Endothelial cell of umbilical vein (primary cell): ENCODE measurements at regions of chr12 and their contacts with region 1.

Region 1: DNA sequence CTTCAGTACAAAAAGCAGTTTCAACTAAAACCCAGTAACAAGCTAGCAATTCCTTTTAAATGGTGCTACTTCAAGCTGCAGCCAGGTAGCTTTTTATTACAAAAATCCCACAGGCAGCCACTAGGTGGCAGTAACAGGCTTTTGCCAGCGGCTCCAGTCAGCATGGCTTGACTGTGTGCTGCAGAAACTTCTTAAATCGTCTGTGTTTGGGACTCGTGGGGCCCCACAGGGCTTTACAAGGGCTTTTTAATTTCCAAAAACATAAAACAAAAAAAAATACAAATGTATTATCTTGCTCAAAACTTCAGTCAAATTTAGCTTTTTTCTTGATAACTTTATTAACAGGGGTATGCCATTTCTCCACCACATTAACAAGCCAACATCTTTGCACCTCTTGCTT is 3.6 kb upstream of the CLEC4E start:
- DNase-seq: peak; percentile 81
- H3K4me3 ChIP-seq: no peak overlapping the region
- H3K27ac ChIP-seq: no peak overlapping the region
- H3K4me1 ChIP-seq: no peaks in the 10 kb centered on the region
- H3K27me3 ChIP-seq: peaks cover 10 to 22% of the 10 kb centered on the region in 2 experiments
- CTCF ChIP-seq: peak; percentile 74 to 81
- POLR2A ChIP-seq: no peak

Region 2: DNA sequence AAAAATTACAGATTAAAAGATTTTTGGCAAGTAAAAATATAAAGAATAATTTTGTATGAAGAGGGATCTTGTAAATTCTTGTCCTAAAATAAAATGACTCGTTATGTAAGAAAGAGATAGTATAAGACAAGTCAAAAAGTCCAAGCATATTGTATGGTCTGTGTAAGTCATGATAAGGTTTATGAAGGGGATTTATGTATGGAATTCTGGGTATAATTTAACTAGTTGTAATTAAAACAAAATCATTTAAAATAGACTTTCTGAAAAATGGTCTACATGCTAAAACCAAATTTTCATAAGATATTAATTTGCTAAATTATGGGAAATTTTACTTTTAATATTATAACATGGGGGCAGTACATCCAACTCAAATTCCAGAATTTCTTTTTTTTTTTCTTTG is 1372.4 kb before region 1 on chr12:
- CTCF ChIA-PET with region 1: no interaction called
- POLR2A ChIA-PET with region 1: no interaction called
- dilution Hi-C with region 1: no loop called
- intact Hi-C with region 1: no loop called
- DNase-seq: no peak
- H3K4me3 ChIP-seq: no peak overlapping the region
- H3K27ac ChIP-seq: no peak overlapping the region
- H3K4me1 ChIP-seq: no peaks in the 10 kb centered on the region
- H3K27me3 ChIP-seq: peaks cover 2 to 22% of the 10 kb centered on the region in 2 experiments
- CTCF ChIP-seq: no peak
- POLR2A ChIP-seq: no peak

Region 3: DNA sequence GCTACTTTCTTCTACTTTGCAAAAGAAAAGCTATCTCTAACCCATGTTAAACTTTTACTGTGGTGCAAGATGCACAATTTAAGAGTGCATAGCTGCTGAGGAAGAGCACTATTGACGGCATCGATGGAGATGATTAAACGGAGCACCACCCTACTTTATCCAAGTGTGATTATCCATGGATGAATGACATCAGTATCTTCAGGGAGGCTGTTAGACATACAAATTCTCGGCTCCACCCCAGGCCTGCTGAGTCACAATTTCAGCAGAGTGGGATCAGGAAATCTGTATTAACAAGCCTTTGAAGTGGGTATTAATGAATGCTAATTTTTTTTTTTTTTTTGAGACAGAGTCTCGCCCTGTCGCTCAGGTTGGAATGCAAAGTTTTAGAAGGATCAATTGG is 687.8 kb before region 1 on chr12:
- CTCF ChIA-PET with region 1: no interaction called
- POLR2A ChIA-PET with region 1: no interaction called
- dilution Hi-C with region 1: no loop called
- intact Hi-C with region 1: no loop called
- DNase-seq: no peak
- H3K4me3 ChIP-seq: no peak overlapping the region
- H3K27ac ChIP-seq: no peak overlapping the region
- H3K4me1 ChIP-seq: no peaks in the 10 kb centered on the region
- H3K27me3 ChIP-seq: no peaks in the 10 kb centered on the region
- CTCF ChIP-seq: no peak
- POLR2A ChIP-seq: no peak

Region 4: DNA sequence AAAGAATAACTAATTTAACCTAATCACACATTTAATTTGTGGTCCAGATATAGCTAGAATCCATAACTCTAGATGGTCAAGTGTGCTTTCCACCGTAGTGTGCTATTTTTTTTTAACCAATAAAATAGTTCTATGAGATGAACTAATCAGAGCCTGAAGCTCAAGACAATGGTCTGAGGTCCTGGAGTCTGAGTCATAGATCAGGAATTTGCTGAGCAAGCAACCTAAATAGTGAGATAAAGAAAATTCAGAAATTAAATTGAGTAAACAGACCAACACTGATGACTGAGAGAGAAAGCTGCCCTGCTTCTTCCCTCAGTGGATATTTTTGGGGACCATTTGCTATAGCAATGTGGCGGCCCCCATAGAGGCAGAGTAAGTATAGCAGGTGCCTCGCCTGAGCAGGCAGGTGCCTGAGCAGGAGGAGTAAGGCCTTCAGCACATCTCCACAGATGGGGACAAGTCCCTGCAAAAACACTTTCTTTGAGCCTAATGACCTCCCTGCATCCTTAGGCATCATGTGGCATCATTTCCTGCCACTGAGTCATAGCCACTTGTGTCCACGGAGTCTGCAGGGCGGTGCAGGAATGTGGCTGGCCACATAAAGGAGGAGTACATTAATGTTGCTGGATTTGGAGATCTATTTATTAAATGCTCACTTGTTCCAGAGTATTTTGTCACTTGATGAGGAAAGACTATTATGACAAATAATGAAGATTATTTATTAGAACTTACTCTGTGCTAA is 10.3 kb after region 1 on chr12:
- CTCF ChIA-PET with region 1: interaction called, 24 read pairs
- POLR2A ChIA-PET with region 1: no interaction called
- dilution Hi-C with region 1: no loop called
- intact Hi-C with region 1: no loop called
- DNase-seq: peak; percentile 59
- H3K4me3 ChIP-seq: no peak overlapping the region
- H3K27ac ChIP-seq: peak overlapping the region; percentile 60
- H3K4me1 ChIP-seq: peaks cover 15% of the 10 kb centered on the region
- H3K27me3 ChIP-seq: no peaks in the 10 kb centered on the region
- CTCF ChIP-seq: no peak
- POLR2A ChIP-seq: no peak

Region 5: GRCh38 chr12:8603286-8603685 is 59.0 kb after region 1 on chr12:
- CTCF ChIA-PET with region 1: interaction called, 256 read pairs
- POLR2A ChIA-PET with region 1: interaction called, 3 read pairs
- dilution Hi-C with region 1: no loop called
- intact Hi-C with region 1: no loop called
- DNase-seq: no peak
- H3K4me3 ChIP-seq: no peak overlapping the region
- H3K27ac ChIP-seq: no peak overlapping the region
- H3K4me1 ChIP-seq: no peaks in the 10 kb centered on the region
- H3K27me3 ChIP-seq: peaks cover 4 to 11% of the 10 kb centered on the region in 2 experiments
- CTCF ChIP-seq: no peak
- POLR2A ChIP-seq: no peak

Region 6: DNA sequence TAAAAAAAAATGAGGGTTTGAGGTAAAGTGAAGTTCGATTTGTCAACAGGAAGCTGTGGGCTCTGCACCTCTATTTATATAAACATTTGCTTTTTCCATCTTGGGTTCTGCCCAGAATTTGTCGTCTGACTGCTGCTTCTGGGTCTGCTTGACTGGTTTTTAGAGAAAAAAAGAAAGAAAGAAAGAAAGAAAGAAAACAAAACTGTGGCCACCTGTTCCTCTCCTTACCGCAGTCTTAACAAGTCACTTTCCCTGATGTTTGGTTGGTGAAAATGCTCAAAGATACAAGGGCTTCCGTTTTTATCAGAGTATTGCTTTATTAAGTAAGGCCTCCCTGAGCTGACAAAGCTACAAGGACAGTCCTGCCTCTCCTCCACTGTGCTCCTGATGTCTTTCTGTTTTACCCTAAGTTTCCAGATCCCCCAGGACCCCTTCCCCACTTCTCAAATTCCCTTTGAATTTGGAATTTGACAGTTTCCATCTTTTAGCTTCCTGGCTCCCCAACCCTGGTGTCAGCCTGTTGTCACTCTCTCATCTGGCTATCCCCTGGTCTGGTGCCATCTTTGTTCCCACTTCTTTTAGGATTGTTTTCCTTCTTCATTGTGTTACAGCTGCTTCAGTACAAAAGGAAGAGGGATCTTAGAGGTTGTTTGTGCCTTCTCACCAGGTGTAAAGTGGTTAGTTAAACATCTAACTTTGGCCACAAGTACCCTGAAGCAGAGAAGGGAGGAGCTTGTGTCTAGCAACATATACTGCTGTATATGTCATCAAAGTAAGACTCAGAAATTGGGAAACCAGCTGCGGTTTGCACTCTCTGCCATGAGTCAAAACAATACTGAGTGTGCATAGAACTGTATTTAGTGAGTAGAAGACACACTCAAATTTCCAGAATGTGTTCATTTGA is 100.3 kb after region 1 on chr12:
- CTCF ChIA-PET with region 1: interaction called, 10 read pairs
- POLR2A ChIA-PET with region 1: no interaction called
- dilution Hi-C with region 1: no loop called
- intact Hi-C with region 1: no loop called
- DNase-seq: no peak
- H3K4me3 ChIP-seq: no peak overlapping the region
- H3K27ac ChIP-seq: no peak overlapping the region
- H3K4me1 ChIP-seq: no peaks in the 10 kb centered on the region
- H3K27me3 ChIP-seq: peaks cover 0 to 8% of the 10 kb centered on the region in 2 experiments
- CTCF ChIP-seq: no peak
- POLR2A ChIP-seq: no peak

Region 7: DNA sequence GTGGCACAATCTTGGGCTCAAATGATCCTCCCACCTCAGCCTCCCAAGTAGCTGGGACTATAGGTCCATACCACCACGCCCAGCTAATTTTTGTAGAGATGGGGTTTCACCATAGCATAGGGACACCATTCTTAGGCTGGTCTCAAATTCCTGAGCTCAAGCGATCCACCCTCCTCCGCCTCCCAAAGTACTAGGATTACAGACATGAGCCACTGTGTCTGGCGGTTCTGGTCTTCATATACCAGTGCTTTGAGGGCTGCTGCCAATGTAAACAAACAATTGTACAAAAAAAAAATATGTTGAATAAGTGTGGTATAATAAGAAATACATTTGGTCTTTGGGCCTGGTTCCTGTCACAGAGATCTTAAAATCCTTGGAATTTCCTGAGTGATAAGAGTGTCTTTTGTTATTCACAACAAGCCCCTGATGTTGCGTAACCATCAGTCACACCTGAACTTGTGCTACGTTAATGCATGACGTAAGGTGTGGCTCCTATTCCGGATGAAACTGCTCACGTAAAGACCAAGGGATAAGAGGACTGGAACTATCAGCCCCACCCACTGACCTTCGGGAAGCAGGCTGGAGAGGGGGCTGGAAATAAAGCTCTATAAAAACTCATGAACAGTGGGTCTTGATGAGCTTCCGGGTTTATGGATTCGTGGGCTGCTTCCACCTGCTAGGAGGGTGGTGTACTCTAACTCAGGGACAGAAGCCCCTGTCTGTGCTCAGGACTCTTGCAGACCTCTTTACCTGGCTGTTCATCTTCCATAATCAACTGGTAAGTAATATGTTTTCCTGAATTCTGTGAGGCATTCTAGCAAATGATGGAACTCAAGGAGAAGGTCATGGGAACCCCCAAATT is 137.0 kb after region 1 on chr12:
- CTCF ChIA-PET with region 1: interaction called, 17 read pairs
- POLR2A ChIA-PET with region 1: no interaction called
- dilution Hi-C with region 1: no loop called
- intact Hi-C with region 1: loop called (anchors 1 kb)
- DNase-seq: peak; percentile 91
- H3K4me3 ChIP-seq: peak overlapping the region in 2 of 3 experiments; percentile 3 to 53
- H3K27ac ChIP-seq: peak overlapping the region; percentile 63
- H3K4me1 ChIP-seq: peaks cover 27% of the 10 kb centered on the region
- H3K27me3 ChIP-seq: no peaks in the 10 kb centered on the region
- CTCF ChIP-seq: no peak
- POLR2A ChIP-seq: no peak

Region 8: GRCh38 chr12:9032202-9033178 is 488.2 kb after region 1 on chr12:
- CTCF ChIA-PET with region 1: interaction called, 12 read pairs
- POLR2A ChIA-PET with region 1: no interaction called
- dilution Hi-C with region 1: no loop called
- intact Hi-C with region 1: no loop called
- DNase-seq: no peak
- H3K4me3 ChIP-seq: no peak overlapping the region
- H3K27ac ChIP-seq: no peak overlapping the region
- H3K4me1 ChIP-seq: no peaks in the 10 kb centered on the region
- H3K27me3 ChIP-seq: peaks cover 5 to 7% of the 10 kb centered on the region in 2 experiments
- CTCF ChIP-seq: no peak
- POLR2A ChIP-seq: no peak